Sigmoid colon (tissue), 7 donors: ENCODE measurements at regions of chr12 and their contacts with region 1.

Region 1: GRCh38 chr12:82685790-82686167 is 927 bp upstream of the TMTC2 start:
- DNase-seq: peak; percentile 98
- H3K4me3 ChIP-seq: peak overlapping the region; percentile 91 to 97 (median 92)
- H3K27ac ChIP-seq: peak overlapping the region; percentile 90 to 98 (median 96)
- H3K4me1 ChIP-seq: peaks cover 0 to 40% (median 29%) of the 10 kb centered on the region in 4 donors
- H3K27me3 ChIP-seq: no peaks in the 10 kb centered on the region
- CTCF ChIP-seq: peak; percentile 86 to 93 (median 90)
- EP300 ChIP-seq: no peak
- POLR2A ChIP-seq: no peak

Region 2: GRCh38 chr12:82781309-82781997 is 95.7 kb after region 1 on chr12:
- intact Hi-C with region 1: no loop called
- DNase-seq: no peak
- H3K4me3 ChIP-seq: no peak overlapping the region
- H3K27ac ChIP-seq: peak overlapping the region in 2 of 4 donors; percentile 8 to 12
- H3K4me1 ChIP-seq: peaks cover 0 to 22% (median 14%) of the 10 kb centered on the region in 4 donors
- H3K27me3 ChIP-seq: no peaks in the 10 kb centered on the region
- CTCF ChIP-seq: no peak
- EP300 ChIP-seq: no peak
- POLR2A ChIP-seq: no peak

Region 3: GRCh38 chr12:82874945-82875344 is 189.2 kb after region 1 on chr12:
- intact Hi-C with region 1: loop called (anchors 10 kb)
- DNase-seq: no peak
- H3K4me3 ChIP-seq: no peak overlapping the region
- H3K27ac ChIP-seq: no peak overlapping the region
- H3K4me1 ChIP-seq: peaks cover 0 to 65% (median 36%) of the 10 kb centered on the region in 4 donors
- H3K27me3 ChIP-seq: no peaks in the 10 kb centered on the region
- CTCF ChIP-seq: no peak
- EP300 ChIP-seq: no peak
- POLR2A ChIP-seq: no peak

Region 4: GRCh38 chr12:83016218-83016835 is 330.5 kb after region 1 on chr12:
- intact Hi-C with region 1: loop called (anchors 5 kb)
- DNase-seq: peak; percentile 84
- H3K4me3 ChIP-seq: peak overlapping the region; percentile 22 to 46 (median 40)
- H3K27ac ChIP-seq: peak overlapping the region; percentile 30 to 88 (median 83)
- H3K4me1 ChIP-seq: peaks cover 0 to 53% (median 23%) of the 10 kb centered on the region in 4 donors
- H3K27me3 ChIP-seq: no peaks in the 10 kb centered on the region
- CTCF ChIP-seq: no peak
- EP300 ChIP-seq: no peak
- POLR2A ChIP-seq: no peak

Region 5: DNA sequence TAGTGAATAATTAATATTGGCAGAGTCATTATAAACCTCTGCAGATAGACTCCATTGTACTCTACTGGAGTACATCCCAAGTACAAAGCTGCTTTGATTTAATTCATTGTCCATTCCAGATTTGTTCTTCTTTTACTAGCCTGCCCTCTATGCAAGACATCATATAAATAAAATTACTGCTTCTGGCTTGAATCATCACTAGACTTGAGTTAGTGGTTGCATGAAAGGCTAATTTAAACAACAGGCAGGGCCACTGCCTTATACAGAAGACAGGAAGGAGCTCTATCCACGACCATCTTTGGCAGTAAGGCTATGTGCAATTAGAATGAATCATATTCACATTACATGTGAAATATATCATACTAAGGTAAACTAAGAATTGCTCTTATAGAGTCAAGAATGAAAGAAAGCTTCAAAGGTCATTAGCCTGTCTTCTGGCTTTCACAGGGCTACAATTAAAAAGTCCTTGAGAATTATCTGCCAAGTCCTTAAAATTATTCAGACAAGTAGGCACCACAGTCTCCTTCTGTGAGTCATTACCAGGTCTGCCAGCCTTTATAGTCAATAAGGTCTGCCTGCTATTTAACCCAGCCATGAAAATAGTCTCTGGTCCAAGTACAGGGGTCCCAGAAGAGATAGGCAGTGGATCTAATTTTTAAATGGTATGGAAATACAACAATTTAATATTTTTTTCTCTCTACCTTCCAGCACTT is 632.8 kb after region 1 on chr12:
- intact Hi-C with region 1: loop called (anchors 2 kb)
- DNase-seq: no peak
- H3K4me3 ChIP-seq: no peak overlapping the region
- H3K27ac ChIP-seq: peak overlapping the region in 3 of 4 donors; percentile 65 to 79 (median 78)
- H3K4me1 ChIP-seq: peaks cover 0 to 29% (median 26%) of the 10 kb centered on the region in 4 donors
- H3K27me3 ChIP-seq: no peaks in the 10 kb centered on the region
- CTCF ChIP-seq: no peak
- EP300 ChIP-seq: peak; percentile 36 to 86 (median 62)
- POLR2A ChIP-seq: no peak

Region 6: GRCh38 chr12:83823431-83823963 is 1137.7 kb after region 1 on chr12:
- intact Hi-C with region 1: loop called (anchors 2 kb)
- DNase-seq: no peak
- H3K4me3 ChIP-seq: no peak overlapping the region
- H3K27ac ChIP-seq: no peak overlapping the region
- H3K4me1 ChIP-seq: peaks cover 0 to 20% (median 14%) of the 10 kb centered on the region in 4 donors
- H3K27me3 ChIP-seq: no peaks in the 10 kb centered on the region
- CTCF ChIP-seq: peak in 2 of 4 experiments; percentile 10 to 29
- EP300 ChIP-seq: no peak
- POLR2A ChIP-seq: no peak